ENCODE measurements at regions of chr10 and their contacts with region 1.

Region 1: GRCh38 chr10:113247050-113247790 is 297.2 kb downstream of the TCF7L2 start:
- DNase-seq: no peak
- H3K4me3 ChIP-seq: no peak overlapping the region
- H3K27ac ChIP-seq: no peak overlapping the region
- H3K4me1 ChIP-seq: no peaks in the 10 kb centered on the region; a peak in 1 of 7 replicates
- H3K27me3 ChIP-seq: no peaks in the 10 kb centered on the region
- CTCF ChIP-seq: no peak
- EP300 ChIP-seq: no peak
- POLR2A ChIP-seq: no peak
- RAD21 ChIP-seq: no peak

Region 2: GRCh38 chr10:113232928-113233511 is 14.2 kb before region 1 on chr10:
- CTCF ChIA-PET with region 1: interaction called, 10 read pairs
- POLR2A ChIA-PET with region 1: interaction called, 3 read pairs
- DNase-seq: peak in 1 of 2 experiments; percentile 45
- H3K4me3 ChIP-seq: no peak overlapping the region
- H3K27ac ChIP-seq: no peak overlapping the region
- H3K4me1 ChIP-seq: peaks cover 0 to 6% (median 0%) of the 10 kb centered on the region in 4 experiments; a peak in 1 of 7 replicates
- H3K27me3 ChIP-seq: no peaks in the 10 kb centered on the region
- CTCF ChIP-seq: peak in 1 of 3 experiments; percentile 4; a peak in 1 of 4 replicates
- EP300 ChIP-seq: no peak
- POLR2A ChIP-seq: no peak
- RAD21 ChIP-seq: peak; percentile 24 to 31; a peak in 3 of 4 replicates

Measured in H1 (cell line).